ENCODE measurements at regions of chr5 and their contacts with region 1.

Region 1: GRCh38 chr5:119340597-119341218 is 15.1 kb upstream of the TNFAIP8 start:
- DNase-seq: peak; percentile 83
- ATAC-seq: peak; percentile 38
- H3K4me3 Mint-ChIP-seq: peak overlapping the region; percentile 73
- H3K27ac Mint-ChIP-seq: peak overlapping the region; percentile 95
- H3K4me1 Mint-ChIP-seq: peaks cover 94% of the 10 kb centered on the region
- H3K27me3 Mint-ChIP-seq: no peaks in the 10 kb centered on the region
- CTCF ChIP-seq: no peak

Region 2: GRCh38 chr5:119309326-119309725 is 31.4 kb before region 1 on chr5:
- CTCF ChIA-PET with region 1: interaction called, 9 read pairs
- POLR2A ChIA-PET with region 1: interaction called, 13 read pairs
- intact Hi-C with region 1: loop called (anchors 5 kb)
- DNase-seq: peak; percentile 27
- ATAC-seq: peak; percentile 4
- H3K4me3 Mint-ChIP-seq: peak overlapping the region; percentile 76
- H3K27ac Mint-ChIP-seq: peak overlapping the region; percentile 98
- H3K4me1 Mint-ChIP-seq: peaks cover 94% of the 10 kb centered on the region
- H3K27me3 Mint-ChIP-seq: no peaks in the 10 kb centered on the region
- CTCF ChIP-seq: no peak

Region 3: DNA sequence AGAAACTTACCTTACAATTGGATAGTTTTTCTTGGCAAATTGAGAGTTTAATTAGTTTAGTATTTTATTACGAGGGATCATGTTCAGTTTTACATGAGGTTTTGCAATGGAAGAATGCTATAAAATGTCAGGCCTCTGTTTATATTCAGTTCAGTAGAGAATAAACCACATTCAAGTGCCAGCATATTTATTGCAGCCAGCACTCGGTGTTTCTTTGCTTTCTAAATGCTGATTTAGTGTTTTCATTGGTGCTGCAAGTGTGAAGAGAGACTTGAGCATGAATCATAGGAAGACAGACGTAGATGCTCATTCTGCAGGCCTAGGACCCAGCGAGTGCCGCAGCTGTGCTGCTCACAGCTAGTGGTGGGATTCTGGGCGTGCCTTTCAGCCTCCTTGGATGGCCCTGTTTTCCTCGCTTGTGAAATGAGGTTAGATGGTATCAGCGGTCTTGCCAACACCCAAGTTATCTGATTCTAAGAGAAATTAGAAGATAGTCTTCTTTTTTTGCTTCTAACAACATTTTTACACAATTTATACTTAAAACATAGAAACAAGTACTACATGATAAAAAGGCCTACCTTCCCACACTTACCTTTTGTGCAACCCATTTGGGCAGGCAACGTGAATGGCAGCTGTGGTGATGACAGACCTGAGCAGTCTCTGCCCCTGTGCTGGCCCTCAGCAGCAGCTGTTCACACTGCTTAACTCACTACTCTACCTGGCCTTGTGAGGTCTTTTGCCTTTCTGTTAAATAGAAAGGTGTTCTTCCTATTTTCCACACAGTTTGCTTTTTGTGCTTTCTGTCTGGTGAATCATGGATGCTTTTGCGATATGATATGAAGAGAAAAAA is 11.7 kb before region 1 on chr5:
- CTCF ChIA-PET with region 1: interaction called, 9 read pairs
- POLR2A ChIA-PET with region 1: interaction called, 14 read pairs
- intact Hi-C with region 1: loop called (anchors 1 kb)
- DNase-seq: peak; percentile 80
- ATAC-seq: peak; percentile 73
- H3K4me3 Mint-ChIP-seq: peak overlapping the region; percentile 43
- H3K27ac Mint-ChIP-seq: peak overlapping the region; percentile 95
- H3K4me1 Mint-ChIP-seq: peaks cover 92% of the 10 kb centered on the region
- H3K27me3 Mint-ChIP-seq: no peaks in the 10 kb centered on the region
- CTCF ChIP-seq: no peak

Region 4: DNA sequence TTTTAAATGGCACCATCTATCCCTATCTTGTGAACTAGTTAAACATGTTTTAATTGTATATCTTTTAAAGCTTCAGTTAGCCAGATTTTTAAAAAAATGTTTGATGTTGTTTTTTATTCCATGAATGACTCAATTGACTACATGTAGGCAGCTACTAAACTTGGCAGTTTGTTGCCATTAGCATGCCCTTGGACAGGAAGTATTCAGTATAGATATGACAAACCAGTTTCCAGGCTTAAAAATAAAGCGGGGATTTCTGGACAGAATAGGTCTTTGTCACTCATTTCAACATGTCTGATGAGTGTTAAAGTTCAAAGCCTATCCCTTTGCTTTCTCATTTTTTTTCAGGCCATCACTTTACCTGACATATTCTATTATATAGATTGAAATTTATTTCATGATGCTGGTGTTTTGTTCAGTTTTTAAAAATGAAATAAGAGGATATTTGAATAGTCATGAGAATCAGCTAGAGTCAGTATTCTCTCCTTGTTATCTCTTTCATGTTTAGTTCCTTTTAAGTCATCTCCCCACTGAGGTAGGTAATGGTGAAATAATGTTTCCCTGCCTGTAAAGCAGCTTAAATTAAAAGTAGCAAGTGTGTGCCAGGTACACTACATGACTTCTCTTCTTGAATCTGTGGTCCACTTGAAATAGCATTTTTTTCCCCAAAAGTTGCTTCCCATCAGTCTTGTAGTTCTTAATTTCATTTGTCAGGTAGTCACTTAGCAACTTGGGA is 27.0 kb after region 1 on chr5:
- CTCF ChIA-PET with region 1: interaction called, 5 read pairs
- POLR2A ChIA-PET with region 1: interaction called, 147 read pairs
- intact Hi-C with region 1: no loop called
- DNase-seq: peak; percentile 48
- ATAC-seq: peak; percentile 65
- H3K4me3 Mint-ChIP-seq: peak overlapping the region; percentile 67
- H3K27ac Mint-ChIP-seq: peak overlapping the region; percentile 99
- H3K4me1 Mint-ChIP-seq: peaks cover 81% of the 10 kb centered on the region
- H3K27me3 Mint-ChIP-seq: no peaks in the 10 kb centered on the region
- CTCF ChIP-seq: no peak